H1 (cell line): ENCODE measurements at regions of chr19 and their contacts with region 1.

Region 1: GRCh38 chr19:10238172-10238783 is 7.1 kb upstream of the S1PR2 start:
- DNase-seq: no peak
- H3K4me3 ChIP-seq: no peak overlapping the region
- H3K27ac ChIP-seq: no peak overlapping the region
- H3K4me1 ChIP-seq: peaks cover 0 to 7% (median 2%) of the 10 kb centered on the region in 4 experiments; a peak in 4 of 7 replicates
- H3K27me3 ChIP-seq: no peaks in the 10 kb centered on the region
- CTCF ChIP-seq: no peak
- EP300 ChIP-seq: no peak
- POLR2A ChIP-seq: no peak
- RAD21 ChIP-seq: no peak

Region 2: GRCh38 chr19:10219678-10220077 is 18.6 kb before region 1 on chr19:
- CTCF ChIA-PET with region 1: interaction called, 14 read pairs
- POLR2A ChIA-PET with region 1: interaction called, 4 read pairs
- DNase-seq: peak in 1 of 2 experiments; percentile 46
- H3K4me3 ChIP-seq: no peak overlapping the region; a peak in 1 of 8 replicates
- H3K27ac ChIP-seq: peak overlapping the region; percentile 29; the same call in 1 of the 2 replicates
- H3K4me1 ChIP-seq: peaks cover 0 to 2% (median 0%) of the 10 kb centered on the region in 4 experiments; a peak in 2 of 7 replicates
- H3K27me3 ChIP-seq: no peaks in the 10 kb centered on the region
- CTCF ChIP-seq: peak; percentile 24 to 64 (median 56)
- EP300 ChIP-seq: peak; percentile 54 to 80; a peak in 2 of 3 replicates
- POLR2A ChIP-seq: peak in 1 of 2 experiments; percentile 63; a peak in 1 of 3 replicates
- RAD21 ChIP-seq: peak; percentile 38 to 55